ENCODE measurements at regions of chr7 and their contacts with region 1.

Region 1: DNA sequence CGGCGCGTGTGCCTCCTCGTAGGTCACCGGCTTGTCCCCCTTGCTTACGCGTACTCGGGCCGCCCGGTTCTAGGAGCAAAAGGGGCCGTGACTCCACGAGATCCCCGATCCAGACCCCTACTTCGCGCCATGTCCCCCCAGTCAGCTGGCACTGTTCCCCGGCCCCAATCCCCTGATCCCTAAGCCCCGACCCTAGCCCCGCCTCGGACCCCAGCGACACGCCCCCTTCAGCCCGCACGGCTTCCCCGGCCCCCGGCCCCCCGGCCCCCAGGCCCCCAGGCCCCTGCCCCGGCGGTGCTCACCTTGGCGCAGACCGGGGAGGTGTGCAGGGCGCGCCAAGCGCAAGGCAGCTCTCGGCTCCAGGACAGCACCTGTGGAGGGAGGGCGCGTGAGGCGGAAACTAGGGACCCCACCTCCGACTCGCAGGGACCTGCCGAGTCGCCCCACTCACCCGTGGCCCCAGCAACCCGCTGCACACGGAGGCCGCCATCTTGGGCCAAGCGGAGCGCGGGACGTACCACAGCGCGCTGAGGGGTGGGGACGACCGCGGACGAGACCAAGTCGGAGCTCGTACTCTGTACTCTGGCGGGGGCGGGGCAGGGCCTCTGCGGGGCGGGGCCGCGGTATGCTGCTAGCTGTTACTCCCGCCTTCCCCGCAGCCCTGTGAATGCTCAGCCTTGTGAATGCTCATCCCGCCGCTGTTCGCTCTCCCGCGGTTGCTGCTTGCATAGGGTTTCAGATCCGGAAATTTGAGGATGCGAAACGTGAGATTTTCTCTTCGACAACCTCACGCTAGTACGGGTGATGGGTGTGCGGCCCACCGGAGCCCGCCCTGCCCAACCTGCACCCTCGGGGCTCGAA is at the start of gene MRPS24:
- DNase-seq: peak; percentile 89 to 98 (median 92)
- H3K4me3 ChIP-seq: peak within 1 kb of the TSS; percentile 83
- H3K4me3 Mint-ChIP-seq: peak within 1 kb of the TSS; percentile 91 to 98 (median 95)
- H3K27ac ChIP-seq: peak within 1 kb of the TSS; percentile 40
- H3K27ac Mint-ChIP-seq: peak within 1 kb of the TSS; percentile 85 to 97 (median 92)
- H3K4me1 ChIP-seq: peaks cover 19% of the 10 kb centered on the region
- H3K4me1 Mint-ChIP-seq: peaks cover 21 to 22% (median 22%) of the 10 kb centered on the region in 3 donors
- H3K27me3 ChIP-seq: no peaks in the 10 kb centered on the region
- H3K27me3 Mint-ChIP-seq: no peaks in the 10 kb centered on the region
- total RNA-seq, gene MRPS24: 140 to 147 TPM

Region 2: GRCh38 chr7:43847496-43847895 is 21.7 kb before region 1 on chr7:
- CTCF ChIA-PET with region 1: no interaction called
- POLR2A ChIA-PET with region 1: no interaction called
- DNase-seq: no peak
- H3K4me3 ChIP-seq: no peak overlapping the region
- H3K4me3 Mint-ChIP-seq: no peak overlapping the region
- H3K27ac ChIP-seq: no peak overlapping the region
- H3K27ac Mint-ChIP-seq: no peak overlapping the region
- H3K4me1 ChIP-seq: no peaks in the 10 kb centered on the region
- H3K4me1 Mint-ChIP-seq: no peaks in the 10 kb centered on the region
- H3K27me3 ChIP-seq: no peaks in the 10 kb centered on the region
- H3K27me3 Mint-ChIP-seq: peaks cover 6 to 10% of the 10 kb centered on the region in 2 donors

Region 3: DNA sequence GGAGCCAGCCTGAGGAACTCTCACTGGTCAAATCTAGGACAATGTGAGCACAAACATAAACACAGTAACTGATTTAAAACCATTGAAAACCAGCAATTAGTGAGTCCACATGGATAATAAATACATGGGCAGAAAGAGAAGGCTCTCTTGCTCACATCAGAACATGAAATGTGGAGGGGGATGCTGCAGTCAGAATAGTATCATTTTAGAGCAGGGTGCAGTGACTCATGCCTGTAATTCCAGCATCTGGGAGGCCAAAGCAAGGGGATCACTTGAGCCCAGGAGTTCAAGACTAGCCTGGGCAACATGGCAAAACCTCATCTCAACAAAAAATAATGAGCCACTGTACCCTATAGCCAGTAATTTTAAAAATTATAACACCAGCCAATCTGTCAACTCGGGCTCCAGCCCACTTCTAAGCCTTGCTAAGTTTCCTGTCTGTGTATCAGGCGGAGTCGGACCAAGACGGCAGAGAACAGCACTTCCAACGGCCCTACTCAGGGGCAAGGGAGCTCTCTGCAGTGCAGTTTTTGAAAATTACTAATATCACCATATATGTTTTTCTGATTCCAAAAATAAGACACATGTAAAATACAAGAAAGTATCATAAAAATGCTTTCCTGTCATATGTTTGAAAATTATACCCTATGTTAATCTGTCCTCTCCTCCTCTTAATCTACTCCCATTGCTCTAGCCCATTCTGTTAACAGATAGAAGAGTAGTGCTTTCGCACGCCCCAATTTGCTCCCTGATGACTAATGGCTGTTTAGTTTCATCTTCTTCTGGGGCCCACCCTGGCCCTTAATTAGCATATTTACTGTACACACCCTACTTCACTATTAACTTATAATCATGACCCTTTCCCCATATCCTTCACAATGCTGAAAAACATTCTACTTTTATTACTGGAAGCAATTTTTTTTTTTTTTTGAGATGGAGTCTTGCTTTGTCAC is 20.0 kb after region 1 on chr7:
- CTCF ChIA-PET with region 1: no interaction called
- POLR2A ChIA-PET with region 1: no interaction called
- DNase-seq: no peak
- H3K4me3 ChIP-seq: no peak overlapping the region
- H3K4me3 Mint-ChIP-seq: peak overlapping the region in 1 of 7 donors; percentile 29
- H3K27ac ChIP-seq: no peak overlapping the region
- H3K27ac Mint-ChIP-seq: peak overlapping the region in 4 of 8 donors; percentile 13 to 67 (median 32)
- H3K4me1 ChIP-seq: peaks cover 10% of the 10 kb centered on the region
- H3K4me1 Mint-ChIP-seq: peaks cover 34 to 46% (median 43%) of the 10 kb centered on the region in 3 donors
- H3K27me3 ChIP-seq: no peaks in the 10 kb centered on the region
- H3K27me3 Mint-ChIP-seq: no peaks in the 10 kb centered on the region

Region 4: GRCh38 chr7:43925984-43926797 is 57.0 kb after region 1 on chr7 and contains the start of gene UBE2D4:
- CTCF ChIA-PET with region 1: no interaction called
- POLR2A ChIA-PET with region 1: interaction called, 10 read pairs
- DNase-seq: peak; percentile 79 to 92 (median 86)
- H3K4me3 ChIP-seq: peak within 1 kb of the TSS; percentile 72
- H3K4me3 Mint-ChIP-seq: peak within 1 kb of the TSS; percentile 89 to 99 (median 92)
- H3K27ac ChIP-seq: peak within 1 kb of the TSS; percentile 92
- H3K27ac Mint-ChIP-seq: peak within 1 kb of the TSS; percentile 87 to 98 (median 96)
- H3K4me1 ChIP-seq: peaks cover 25% of the 10 kb centered on the region
- H3K4me1 Mint-ChIP-seq: peaks cover 21 to 42% (median 34%) of the 10 kb centered on the region in 3 donors
- H3K27me3 ChIP-seq: no peaks in the 10 kb centered on the region
- H3K27me3 Mint-ChIP-seq: no peaks in the 10 kb centered on the region
- total RNA-seq, gene UBE2D4: 15.2 to 16.2 TPM